OCI-LY7 (cell line): ENCODE measurements at regions of chr12 and their contacts with region 1.

Region 1: DNA sequence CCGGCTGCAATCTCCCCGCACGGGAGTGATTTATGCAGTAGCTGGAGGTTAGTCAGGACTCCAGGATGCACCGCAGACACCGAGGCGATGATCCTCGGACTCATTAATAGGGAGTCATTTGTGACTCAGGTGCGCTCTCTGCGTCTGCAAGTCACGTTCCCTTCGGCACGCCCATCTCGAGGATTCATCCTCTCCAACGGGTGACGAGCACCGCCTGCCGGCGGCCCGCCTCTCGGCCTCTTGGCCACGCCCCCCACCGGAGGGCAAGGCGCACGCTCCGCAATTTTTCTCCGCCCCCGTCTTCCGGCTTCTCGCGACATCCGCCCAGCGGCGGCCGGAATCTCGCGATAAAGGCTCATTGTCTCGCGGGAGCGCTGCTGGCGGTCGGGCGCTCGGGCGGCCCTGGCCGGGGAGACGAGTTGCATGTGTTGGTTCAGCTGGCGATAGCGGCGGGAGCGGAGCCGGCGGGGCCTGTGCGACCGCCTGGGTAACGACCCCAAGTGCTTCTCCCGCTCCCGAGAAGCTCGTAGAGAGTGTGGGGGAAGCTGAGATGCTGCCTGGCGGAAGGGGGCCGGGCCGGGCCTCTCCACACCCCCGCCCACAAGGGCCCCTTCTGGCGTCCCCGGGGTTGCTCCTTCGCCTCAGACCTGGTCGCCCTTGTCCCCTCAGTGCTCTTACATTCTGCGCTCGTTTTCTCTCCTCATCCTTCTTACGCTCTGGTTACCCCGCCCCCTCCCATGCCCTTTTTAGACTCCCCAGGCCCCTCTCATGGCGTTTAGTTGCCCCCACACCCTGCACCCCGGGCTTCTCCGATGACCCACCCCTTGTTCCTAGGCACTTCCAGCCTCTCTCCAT is at the start of gene DENR:
- DNase-seq: peak; percentile 100
- H3K4me3 ChIP-seq: peak within 1 kb of the TSS; percentile 92
- H3K27ac ChIP-seq: peak within 1 kb of the TSS; percentile 70
- H3K4me1 ChIP-seq: peaks cover 44% of the 10 kb centered on the region
- CTCF ChIP-seq: peak; percentile 85
- total RNA-seq, gene DENR: 42.4 and 51.4 TPM in 2 replicates

Region 2: GRCh38 chr12:122336015-122336946 is 416.4 kb before region 1 on chr12:
- CTCF ChIA-PET with region 1: no interaction called
- POLR2A ChIA-PET with region 1: no interaction called
- intact Hi-C with region 1: loop called (anchors 2 kb)
- DNase-seq: peak; percentile 69
- H3K4me3 ChIP-seq: no peak overlapping the region
- H3K27ac ChIP-seq: no peak overlapping the region
- H3K4me1 ChIP-seq: no peaks in the 10 kb centered on the region
- CTCF ChIP-seq: peak; percentile 98

Region 3: GRCh38 chr12:122399592-122400373 is 352.9 kb before region 1 on chr12:
- CTCF ChIA-PET with region 1: no interaction called
- POLR2A ChIA-PET with region 1: no interaction called
- intact Hi-C with region 1: loop called (anchors 2 kb)
- DNase-seq: peak; percentile 84
- H3K4me3 ChIP-seq: peak overlapping the region; percentile 26
- H3K27ac ChIP-seq: peak overlapping the region; percentile 32
- H3K4me1 ChIP-seq: peaks cover 14% of the 10 kb centered on the region
- CTCF ChIP-seq: peak; percentile 93

Region 4: DNA sequence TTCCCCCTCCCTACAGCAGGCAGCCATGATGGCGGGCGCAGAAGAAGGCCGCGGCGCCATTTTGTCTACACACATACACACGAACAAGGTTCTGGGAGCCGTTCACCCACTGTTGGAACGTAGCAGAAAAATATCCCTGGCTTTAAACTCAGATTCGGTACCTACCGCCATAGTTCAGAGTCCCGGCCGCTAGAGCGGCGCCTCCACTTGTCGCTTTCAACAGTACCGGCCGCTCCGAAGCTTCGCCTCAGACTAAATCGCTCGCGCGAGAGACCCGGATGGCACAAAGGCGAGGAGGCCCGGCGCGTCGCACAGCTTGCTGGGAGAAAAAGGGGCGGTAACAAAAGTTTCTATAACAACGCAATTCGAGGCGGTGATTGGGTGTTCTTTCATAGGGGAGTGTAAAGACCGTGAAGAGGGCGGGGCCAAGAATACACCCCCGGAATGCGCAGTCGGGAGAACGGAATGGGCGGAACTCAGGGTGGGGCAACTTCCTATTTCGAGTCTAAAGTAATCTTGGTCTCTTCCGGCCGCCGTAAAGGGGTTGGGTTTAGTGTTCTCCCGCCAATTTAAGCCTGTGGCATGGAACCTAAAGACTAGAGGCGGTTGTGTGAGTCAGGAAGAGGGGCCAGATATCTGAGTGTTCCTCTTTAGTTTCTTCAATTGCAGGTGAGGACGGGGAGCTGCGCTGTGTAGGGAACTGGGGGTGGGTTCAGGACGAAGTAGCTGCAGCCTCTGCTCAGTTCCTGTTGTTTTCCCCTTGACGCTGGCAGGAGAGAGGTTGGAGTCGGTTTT is 225.8 kb before region 1 on chr12 and contains the starts of genes KNTC1 and RSRC2:
- CTCF ChIA-PET with region 1: no interaction called
- POLR2A ChIA-PET with region 1: no interaction called
- intact Hi-C with region 1: loop called (anchors 2 kb)
- DNase-seq: peak; percentile 100
- H3K4me3 ChIP-seq: peak within 1 kb of the TSS; percentile 99
- H3K27ac ChIP-seq: peak within 1 kb of the TSS; percentile 92
- H3K4me1 ChIP-seq: peaks cover 53% of the 10 kb centered on the region
- CTCF ChIP-seq: no peak
- total RNA-seq, gene KNTC1: 138 and 170 TPM in 2 replicates
- total RNA-seq, gene RSRC2: 91.7 and 125 TPM in 2 replicates

Region 5: GRCh38 chr12:122593910-122594309 is 158.8 kb before region 1 on chr12:
- CTCF ChIA-PET with region 1: no interaction called
- POLR2A ChIA-PET with region 1: no interaction called
- intact Hi-C with region 1: no loop called
- DNase-seq: no peak
- H3K4me3 ChIP-seq: no peak overlapping the region
- H3K27ac ChIP-seq: no peak overlapping the region
- H3K4me1 ChIP-seq: no peaks in the 10 kb centered on the region
- CTCF ChIP-seq: no peak

Region 6: DNA sequence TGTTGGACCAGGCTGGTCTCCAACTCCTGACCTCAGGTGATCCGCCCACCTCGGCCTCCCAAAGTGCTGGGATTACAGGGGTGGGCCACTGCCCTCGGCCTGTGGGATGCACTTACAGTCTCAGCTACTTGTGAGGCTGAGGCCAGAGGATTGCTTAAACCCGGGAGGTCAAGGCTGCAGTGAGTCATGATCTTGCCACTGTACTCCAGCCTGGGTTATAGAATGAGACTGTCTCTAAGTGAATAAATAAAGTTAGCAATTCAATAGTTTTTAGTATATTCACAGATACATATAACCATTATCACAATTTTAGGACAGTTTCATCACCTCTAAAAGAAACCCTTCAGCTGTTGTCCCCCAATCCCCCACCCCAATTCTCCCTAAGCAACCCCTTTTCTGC is 110.7 kb before region 1 on chr12:
- CTCF ChIA-PET with region 1: interaction called, 4 read pairs
- POLR2A ChIA-PET with region 1: no interaction called
- intact Hi-C with region 1: loop called (anchors 2 kb)
- DNase-seq: no peak
- H3K4me3 ChIP-seq: no peak overlapping the region
- H3K27ac ChIP-seq: no peak overlapping the region
- H3K4me1 ChIP-seq: peaks cover 18% of the 10 kb centered on the region
- CTCF ChIP-seq: no peak

Region 7: GRCh38 chr12:122726080-122726558 is 26.6 kb before region 1 on chr12:
- CTCF ChIA-PET with region 1: no interaction called
- POLR2A ChIA-PET with region 1: no interaction called
- intact Hi-C with region 1: no loop called
- DNase-seq: no peak
- H3K4me3 ChIP-seq: no peak overlapping the region
- H3K27ac ChIP-seq: no peak overlapping the region
- H3K4me1 ChIP-seq: peaks cover 28% of the 10 kb centered on the region
- CTCF ChIP-seq: no peak

Region 8: GRCh38 chr12:122807651-122808050 is 55.0 kb after region 1 on chr12:
- CTCF ChIA-PET with region 1: no interaction called
- POLR2A ChIA-PET with region 1: no interaction called
- intact Hi-C with region 1: no loop called
- DNase-seq: no peak
- H3K4me3 ChIP-seq: no peak overlapping the region
- H3K27ac ChIP-seq: no peak overlapping the region
- H3K4me1 ChIP-seq: peaks cover 4% of the 10 kb centered on the region
- CTCF ChIP-seq: no peak